PC-9 (cell line): ENCODE measurements at regions of chr4 and their contacts with region 1.

Region 1: GRCh38 chr4:89268679-89269078 is 38.9 kb downstream of the GPRIN3 start:
- DNase-seq: no peak
- H3K4me3 ChIP-seq: no peak overlapping the region
- H3K27ac ChIP-seq: no peak overlapping the region
- H3K4me1 ChIP-seq: no peaks in the 10 kb centered on the region
- H3K27me3 ChIP-seq: no peaks in the 10 kb centered on the region
- CTCF ChIP-seq: no peak

Region 2: DNA sequence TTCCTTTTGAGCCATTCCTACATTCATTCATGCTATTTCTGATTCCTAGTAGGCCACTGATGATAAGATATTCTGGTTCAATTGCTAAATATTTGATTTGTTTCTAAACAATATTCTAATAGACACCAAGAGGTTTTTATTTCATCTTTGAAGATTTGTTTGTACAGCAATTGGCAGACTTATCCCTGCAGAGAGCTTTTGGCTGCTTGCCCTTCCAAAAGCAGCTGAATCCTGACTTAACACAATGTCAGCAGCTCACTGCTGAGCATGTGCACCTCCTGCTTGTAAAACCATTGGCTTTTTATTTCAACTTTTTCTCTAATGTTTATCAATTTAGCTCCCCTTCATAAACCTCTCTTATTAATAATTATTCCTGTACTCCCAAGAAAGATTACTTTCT is 671.3 kb after region 1 on chr4:
- CTCF ChIA-PET with region 1: interaction called, 15 read pairs
- POLR2A ChIA-PET with region 1: no interaction called
- intact Hi-C with region 1: no loop called
- DNase-seq: no peak
- H3K4me3 ChIP-seq: no peak overlapping the region
- H3K27ac ChIP-seq: no peak overlapping the region
- H3K4me1 ChIP-seq: no peaks in the 10 kb centered on the region
- H3K27me3 ChIP-seq: no peaks in the 10 kb centered on the region
- CTCF ChIP-seq: no peak